HEK293T (cell line): ENCODE measurements at regions of chr21 and their contacts with region 1.

Region 1: GRCh38 chr21:46143001-46143427 is 12.4 kb downstream of the FTCD start:
- DNase-seq: no peak

Region 2: GRCh38 chr21:45973659-45974072 is 169.3 kb before region 1 on chr21:
- CTCF ChIA-PET with region 1: interaction called, 9 read pairs
- POLR2A ChIA-PET with region 1: interaction called, 12 read pairs
- DNase-seq: peak; percentile 84

Region 3: GRCh38 chr21:46153247-46154150 is 10.5 kb after region 1 on chr21:
- CTCF ChIA-PET with region 1: interaction called, 14 read pairs
- POLR2A ChIA-PET with region 1: interaction called, 5 read pairs
- DNase-seq: peak; percentile 84

Region 4: DNA sequence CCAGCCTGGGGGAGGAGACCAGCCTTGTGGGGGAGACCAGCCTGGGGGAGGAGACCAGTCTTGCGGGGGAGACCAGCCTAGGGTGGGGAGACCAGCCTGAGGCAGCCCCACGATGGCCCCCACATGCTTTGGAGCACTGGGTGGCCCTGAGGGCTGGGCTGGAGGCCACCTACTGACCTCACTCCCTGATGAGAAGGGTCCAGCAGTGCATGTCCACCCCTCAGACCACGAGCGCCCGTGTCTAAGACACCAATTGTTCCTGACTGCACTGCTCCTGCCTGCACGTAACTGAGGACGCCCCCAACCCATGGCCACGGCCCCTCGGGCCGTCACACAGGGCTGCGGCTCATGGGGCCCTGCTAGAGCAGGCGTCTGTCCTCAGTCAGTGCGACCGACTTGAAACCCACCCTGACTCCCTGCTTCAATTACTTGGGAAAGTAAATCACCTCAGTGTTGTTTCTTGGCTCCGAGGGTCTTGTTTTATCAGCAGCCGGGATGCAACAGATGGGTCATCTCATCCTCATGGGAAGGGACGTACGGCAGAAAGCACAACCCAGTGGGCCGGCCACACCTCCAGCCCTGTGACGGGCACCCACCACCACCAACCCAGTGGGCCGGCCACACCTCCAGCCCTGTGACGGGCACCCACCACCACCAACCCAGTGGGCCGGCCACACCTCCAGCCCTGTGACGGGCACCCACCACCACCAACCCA is 41.1 kb after region 1 on chr21 and contains the start of gene SPATC1L:
- CTCF ChIA-PET with region 1: no interaction called
- POLR2A ChIA-PET with region 1: no interaction called
- DNase-seq: peak; percentile 72